ENCODE measurements at regions of chr12 and their contacts with region 1.

Region 1: DNA sequence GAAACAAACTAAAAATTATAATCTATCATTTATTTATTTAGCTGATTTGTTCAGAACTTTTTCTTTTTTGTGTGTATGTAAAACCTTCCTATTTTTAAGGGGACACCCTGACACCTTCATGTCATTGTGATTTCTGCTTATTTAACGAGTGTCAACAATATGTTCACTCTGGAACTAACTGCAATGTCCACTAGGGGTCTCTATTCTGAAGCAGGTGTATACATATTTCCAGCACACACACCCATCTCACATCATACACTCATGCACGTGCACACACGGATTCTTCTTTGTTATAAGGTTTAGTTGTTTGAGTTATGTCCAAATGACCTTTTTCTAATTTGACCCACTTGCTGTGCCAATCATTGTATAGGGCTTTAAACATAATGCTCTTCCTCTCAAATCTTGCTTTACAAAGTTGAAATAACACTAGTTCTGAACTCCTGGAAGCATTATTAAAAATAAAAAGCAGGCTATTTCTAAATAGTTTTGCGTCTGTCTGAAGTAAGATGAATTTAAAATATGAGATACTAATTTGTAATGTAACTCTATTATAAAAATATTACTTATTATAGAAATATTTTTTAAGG is 15.5 kb downstream of the E2F7 start:
- DNase-seq: no peak
- H3K4me3 Mint-ChIP-seq: no peak overlapping the region
- H3K27ac Mint-ChIP-seq: no peak overlapping the region
- H3K4me1 Mint-ChIP-seq: peaks cover 4% of the 10 kb centered on the region
- H3K27me3 Mint-ChIP-seq: no peaks in the 10 kb centered on the region

Region 2: DNA sequence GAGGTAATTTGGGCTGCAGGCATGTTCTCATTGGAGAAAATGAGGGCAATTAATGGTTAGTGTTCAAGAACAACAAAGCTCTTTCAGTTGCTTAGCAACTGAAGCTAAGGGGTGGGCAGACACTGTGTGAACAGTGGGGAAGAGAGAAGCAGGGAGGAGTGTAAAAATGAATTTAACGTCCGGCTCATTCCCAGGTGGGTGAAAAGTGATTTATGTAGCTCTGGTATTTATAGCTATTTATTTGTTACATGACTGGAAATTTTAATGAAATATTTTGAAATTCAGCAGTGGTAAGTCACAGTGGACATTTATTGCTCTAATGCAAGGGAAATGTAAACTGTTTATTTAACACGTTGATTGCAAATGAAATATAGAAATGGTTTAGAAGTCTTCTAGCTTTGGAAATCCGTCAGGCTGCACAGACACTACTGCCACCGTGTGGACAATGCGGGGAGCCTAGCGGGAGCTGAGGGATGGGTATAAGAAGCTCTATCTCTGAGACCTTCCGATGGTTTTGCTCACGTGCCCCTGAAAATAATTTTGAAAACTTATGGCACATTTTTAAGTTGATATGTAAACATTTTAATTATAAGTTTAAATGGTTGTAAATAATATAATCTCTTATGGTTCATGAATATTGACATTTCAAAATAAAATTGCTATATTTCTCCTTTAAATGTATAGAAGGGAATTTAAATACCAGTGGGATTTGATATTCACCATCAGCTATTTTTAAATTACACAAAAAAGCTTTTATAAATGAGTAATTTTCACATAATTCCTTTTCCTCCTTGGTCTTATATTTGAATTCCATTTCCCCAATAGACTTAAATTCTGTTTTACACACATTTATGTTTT is 38.9 kb before region 1 on chr12:
- intact Hi-C with region 1: no loop called
- DNase-seq: peak; percentile 45
- H3K4me3 Mint-ChIP-seq: no peak overlapping the region
- H3K27ac Mint-ChIP-seq: no peak overlapping the region
- H3K4me1 Mint-ChIP-seq: peaks cover 3% of the 10 kb centered on the region
- H3K27me3 Mint-ChIP-seq: peaks cover 13% of the 10 kb centered on the region

Region 3: DNA sequence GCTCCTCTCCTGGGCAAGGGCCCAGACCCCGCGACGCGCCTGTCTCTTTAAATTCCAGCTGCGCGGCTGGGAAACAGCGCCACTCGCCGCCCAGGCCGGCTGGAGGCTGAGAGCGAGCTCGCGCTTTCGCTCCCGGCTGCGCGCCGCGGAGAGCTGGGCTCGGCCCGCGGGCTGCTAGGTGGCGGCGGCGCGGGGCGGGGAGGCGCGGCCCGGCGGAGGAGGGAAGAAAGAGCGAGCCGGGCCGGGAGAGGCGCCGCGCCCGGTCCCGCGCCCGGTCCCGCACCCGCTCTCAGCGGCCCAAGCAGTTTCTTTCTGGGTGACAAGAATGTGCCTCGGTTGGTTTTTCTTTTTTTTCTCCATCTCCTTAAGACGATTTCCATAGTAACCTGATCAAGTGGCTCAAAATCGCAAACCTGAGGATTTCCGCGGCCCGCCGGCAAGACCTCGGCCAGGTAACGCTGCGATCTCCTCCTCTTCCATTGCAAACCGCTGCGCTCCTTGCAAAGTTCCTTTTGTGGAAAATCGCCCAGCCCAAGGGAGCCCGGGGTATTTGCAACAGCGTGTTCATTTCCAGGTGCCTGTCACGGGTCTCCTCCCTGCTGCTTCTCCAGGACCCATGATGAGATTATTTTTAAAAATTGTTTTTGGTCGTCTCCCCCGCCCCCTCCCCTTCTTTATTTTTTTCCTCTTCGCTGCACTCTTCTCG is 275.1 kb after region 1 on chr12:
- intact Hi-C with region 1: loop called (anchors 5 kb)
- DNase-seq: peak; percentile 18
- H3K4me3 Mint-ChIP-seq: peak overlapping the region; percentile 70
- H3K27ac Mint-ChIP-seq: no peak overlapping the region
- H3K4me1 Mint-ChIP-seq: peaks cover 6% of the 10 kb centered on the region
- H3K27me3 Mint-ChIP-seq: peaks cover 47% of the 10 kb centered on the region